Ovary (tissue), 10 donors: ENCODE measurements at regions of chr3 and their contacts with region 1.

Region 1: DNA sequence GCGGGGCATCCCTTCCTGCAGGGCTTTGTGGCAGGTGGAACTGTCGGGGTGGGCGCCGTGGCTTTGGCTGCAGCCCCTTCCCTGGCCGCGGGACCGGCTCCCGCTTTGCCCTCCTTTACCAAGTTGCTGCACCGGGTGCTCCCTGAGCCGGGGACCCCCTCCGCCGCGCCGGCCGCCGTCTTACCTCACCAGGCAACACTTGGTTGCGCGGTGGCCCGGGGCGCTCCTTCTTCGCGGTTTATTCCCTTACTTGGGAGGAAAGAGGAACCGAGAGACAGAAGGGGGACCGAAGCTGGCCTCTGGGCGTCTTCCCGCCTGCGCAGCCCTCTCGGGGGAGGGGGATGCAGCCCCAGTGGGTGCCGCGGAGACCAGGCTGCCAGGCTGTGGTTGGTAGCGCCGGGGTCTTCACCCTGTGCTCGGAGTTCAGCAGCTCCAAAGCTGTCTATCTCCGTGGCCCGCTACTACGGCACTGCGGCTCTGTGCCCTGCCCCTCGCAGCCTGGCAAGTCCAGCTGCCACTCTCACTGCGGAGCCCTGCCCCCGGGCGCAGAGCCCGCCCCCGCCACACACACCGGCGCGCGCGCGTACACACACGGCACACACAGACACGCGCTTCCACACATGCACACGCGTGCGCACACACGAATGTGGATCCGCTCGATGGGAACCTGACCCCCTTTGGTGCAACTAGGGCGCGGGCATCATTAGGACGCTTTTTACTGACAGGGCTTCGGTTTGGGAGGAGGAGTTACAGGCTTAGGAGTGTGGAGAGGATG is at the start of gene DGKG:
- DNase-seq: peak in 3 of 5 donors; percentile 24 to 46 (median 28)
- H3K4me3 ChIP-seq: peak within 1 kb of the TSS; percentile 36
- H3K27ac ChIP-seq: peak within 1 kb of the TSS in 1 of 2 donors; percentile 11
- H3K4me1 ChIP-seq: no peaks in the 10 kb centered on the region
- H3K27me3 ChIP-seq: no peaks in the 10 kb centered on the region
- CTCF ChIP-seq: no peak
- EP300 ChIP-seq: no peak
- POLR2A ChIP-seq: peak; percentile 24
- total RNA-seq, gene DGKG: 1.4 to 6.7 (median 4.1) TPM

Region 2: DNA sequence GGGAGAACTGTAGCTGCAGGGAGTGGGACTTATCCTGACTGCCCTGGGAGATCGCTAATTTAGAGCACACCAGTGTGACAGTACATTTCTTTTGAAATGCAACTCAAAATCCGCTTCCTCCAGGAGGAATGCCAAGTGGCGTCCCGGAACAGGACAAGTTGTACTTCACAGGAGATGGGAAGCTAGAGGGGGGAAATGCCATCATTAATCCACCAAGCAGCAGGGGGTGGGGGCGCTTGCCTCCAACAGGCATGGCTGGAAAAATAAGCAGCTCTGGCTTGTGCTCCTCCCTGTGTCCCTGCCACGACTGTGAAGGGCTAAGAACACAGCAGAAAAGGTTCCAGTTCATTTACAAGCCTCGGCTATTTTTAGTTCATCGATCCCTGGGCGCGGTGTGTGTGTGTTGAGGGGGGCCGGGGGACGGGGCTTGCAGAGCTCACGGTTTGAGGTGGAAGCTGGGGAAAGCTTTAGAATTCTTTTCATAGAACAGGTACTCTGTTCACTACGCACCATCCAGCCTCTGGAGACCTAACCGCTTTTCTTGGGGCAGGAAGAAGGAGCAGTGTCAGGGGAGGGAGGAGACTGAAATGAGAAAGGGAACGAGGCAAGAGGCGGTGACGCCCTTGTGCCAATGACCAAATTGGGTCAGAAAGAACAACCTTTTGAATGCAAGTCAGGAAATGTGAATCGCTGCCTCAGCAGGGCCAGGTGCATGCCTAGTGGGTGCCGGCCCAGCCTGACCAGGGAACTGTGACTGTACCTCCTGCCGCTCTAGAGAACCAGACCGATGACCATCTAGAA is 51.9 kb after region 1 on chr3:
- intact Hi-C with region 1: loop called in 1 of 4 experiments (anchors 5 kb)
- DNase-seq: peak in 4 of 5 donors; percentile 41 to 76 (median 70)
- H3K4me3 ChIP-seq: peak overlapping the region; percentile 11
- H3K27ac ChIP-seq: peak overlapping the region in 1 of 2 donors; percentile 51
- H3K4me1 ChIP-seq: peaks cover 13% of the 10 kb centered on the region
- H3K27me3 ChIP-seq: no peaks in the 10 kb centered on the region
- CTCF ChIP-seq: no peak
- EP300 ChIP-seq: no peak
- POLR2A ChIP-seq: no peak

Region 3: DNA sequence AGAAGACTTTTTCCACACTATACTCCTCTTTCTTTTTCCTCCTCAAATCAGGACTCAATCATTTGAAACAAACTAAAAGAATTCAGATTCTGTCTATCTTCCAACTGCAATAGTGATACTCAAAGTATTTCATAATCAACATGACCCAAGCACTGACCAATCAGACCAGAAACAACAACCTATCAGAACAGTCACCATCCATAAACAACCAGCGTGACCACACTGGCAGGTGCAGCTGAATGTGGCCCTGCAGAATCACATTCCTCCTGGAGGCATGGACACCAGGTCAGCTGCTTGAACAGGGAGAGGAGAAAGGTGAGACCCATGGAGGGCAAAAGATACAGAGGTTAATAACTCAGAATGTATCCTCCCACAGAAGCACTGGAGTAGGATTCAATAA is 317.2 kb after region 1 on chr3:
- intact Hi-C with region 1: no loop called
- DNase-seq: no peak
- H3K4me3 ChIP-seq: no peak overlapping the region
- H3K27ac ChIP-seq: no peak overlapping the region
- H3K4me1 ChIP-seq: no peaks in the 10 kb centered on the region
- H3K27me3 ChIP-seq: no peaks in the 10 kb centered on the region
- CTCF ChIP-seq: no peak
- EP300 ChIP-seq: no peak
- POLR2A ChIP-seq: no peak